ENCODE measurements at regions of chr2 and their contacts with region 1.

Region 1: DNA sequence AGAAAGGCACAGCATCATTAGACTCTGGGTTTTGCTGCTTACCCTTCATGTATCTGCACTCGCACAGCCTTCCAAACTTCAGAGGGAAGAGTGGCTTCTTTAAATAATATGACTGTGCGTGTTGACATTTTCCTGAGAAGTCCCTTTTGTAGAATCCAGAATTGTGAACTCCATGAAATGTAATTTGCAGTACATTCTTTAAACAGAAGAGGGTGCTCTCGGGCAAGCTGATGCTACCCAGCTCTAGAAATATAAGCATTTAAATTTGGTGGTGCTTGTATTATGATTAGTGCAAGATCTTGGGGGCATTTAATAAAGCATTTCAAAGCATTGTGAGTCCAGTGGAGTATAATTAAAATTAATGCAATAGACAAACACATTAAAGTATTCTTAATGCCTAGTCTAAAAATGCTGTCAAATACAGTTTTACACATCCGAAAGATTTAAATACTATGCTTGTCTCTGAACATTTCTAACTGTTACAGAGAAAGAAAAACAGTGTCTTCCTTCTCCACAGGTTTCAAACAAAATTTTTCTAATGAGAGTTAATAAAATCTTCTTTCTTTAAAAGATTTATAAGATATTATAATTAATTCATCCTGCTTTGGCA is 17.3 kb upstream of the GTF2A1L start:
- DNase-seq: peak; percentile 53
- ATAC-seq: no peak
- H3K4me3 ChIP-seq: no peak overlapping the region
- H3K27ac ChIP-seq: no peak overlapping the region
- H3K4me1 ChIP-seq: no peaks in the 10 kb centered on the region
- H3K27me3 ChIP-seq: peaks cover 17% of the 10 kb centered on the region
- CTCF ChIP-seq: peak; percentile 82

Region 2: GRCh38 chr2:48651153-48651790 is 51.0 kb after region 1 on chr2:
- CTCF ChIA-PET with region 1: no interaction called
- POLR2A ChIA-PET with region 1: no interaction called
- in situ Hi-C with region 1: no loop called
- intact Hi-C with region 1: no loop called
- DNase-seq: no peak
- ATAC-seq: no peak
- H3K4me3 ChIP-seq: no peak overlapping the region
- H3K27ac ChIP-seq: no peak overlapping the region
- H3K4me1 ChIP-seq: no peaks in the 10 kb centered on the region
- H3K27me3 ChIP-seq: no peaks in the 10 kb centered on the region
- CTCF ChIP-seq: no peak

Region 3: GRCh38 chr2:48727565-48727964 is 127.3 kb after region 1 on chr2:
- CTCF ChIA-PET with region 1: no interaction called
- POLR2A ChIA-PET with region 1: no interaction called
- in situ Hi-C with region 1: no loop called
- intact Hi-C with region 1: loop called (anchors 10 kb)
- DNase-seq: no peak
- ATAC-seq: 0 out of 2 replicates have a peak, but pooled peaks have one; percentile 53
- H3K4me3 ChIP-seq: no peak overlapping the region
- H3K27ac ChIP-seq: no peak overlapping the region
- H3K4me1 ChIP-seq: no peaks in the 10 kb centered on the region
- H3K27me3 ChIP-seq: 0 out of 2 replicates have a peak, but pooled peaks cover 4% of the 10 kb centered on the region
- CTCF ChIP-seq: peak; percentile 22; the same call in 1 of the 2 replicates

Region 4: DNA sequence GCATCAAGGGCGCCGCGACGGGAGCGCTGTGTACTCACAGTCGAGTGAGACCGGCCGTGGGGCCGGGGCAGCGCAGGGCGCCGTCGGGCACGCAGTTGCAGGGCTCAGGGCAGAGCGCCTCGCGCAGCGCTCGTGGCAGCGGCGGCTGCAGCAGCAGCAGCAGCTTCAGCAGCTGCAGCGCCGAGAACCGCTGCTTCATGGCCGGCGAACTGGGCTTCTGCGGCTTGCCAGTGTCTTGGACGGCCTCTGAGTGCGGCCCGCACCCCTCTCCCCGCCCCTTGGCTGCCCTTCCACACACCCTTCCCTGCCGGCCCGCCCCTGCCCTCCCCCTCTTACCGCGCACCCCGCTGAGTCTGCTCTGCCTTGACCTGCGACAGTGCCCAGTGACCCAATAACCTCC is 155.2 kb after region 1 on chr2 and contains the start of gene LHCGR:
- CTCF ChIA-PET with region 1: no interaction called
- POLR2A ChIA-PET with region 1: no interaction called
- in situ Hi-C with region 1: no loop called
- intact Hi-C with region 1: no loop called
- DNase-seq: no peak
- ATAC-seq: peak; percentile 69; the same call in 1 of the 2 replicates
- H3K4me3 ChIP-seq: no peak within 1 kb of the TSS
- H3K27ac ChIP-seq: no peak within 1 kb of the TSS
- H3K4me1 ChIP-seq: no peaks in the 10 kb centered on the region
- H3K27me3 ChIP-seq: peaks cover 6% of the 10 kb centered on the region
- CTCF ChIP-seq: no peak
- total RNA-seq, gene LHCGR: not detected

Measured in Panc1 (cell line).